ENCODE measurements at regions of chr12 and their contacts with region 1.

Region 1: GRCh38 chr12:94762259-94762942 is 112.0 kb upstream of the TMCC3 start:
- DNase-seq: no peak
- ATAC-seq: peak; percentile 45
- H3K4me3 Mint-ChIP-seq: no peak overlapping the region
- H3K27ac Mint-ChIP-seq: peak overlapping the region; percentile 43
- H3K4me1 Mint-ChIP-seq: peaks cover 49% of the 10 kb centered on the region
- H3K27me3 Mint-ChIP-seq: no peaks in the 10 kb centered on the region
- CTCF ChIP-seq: no peak

Region 2: GRCh38 chr12:94140556-94140955 is 621.8 kb before region 1 on chr12:
- CTCF ChIA-PET with region 1: no interaction called
- POLR2A ChIA-PET with region 1: no interaction called
- intact Hi-C with region 1: loop called (anchors 2 kb)
- DNase-seq: no peak
- ATAC-seq: peak; percentile 42
- H3K4me3 Mint-ChIP-seq: no peak overlapping the region
- H3K27ac Mint-ChIP-seq: no peak overlapping the region
- H3K4me1 Mint-ChIP-seq: peaks cover 2% of the 10 kb centered on the region
- H3K27me3 Mint-ChIP-seq: no peaks in the 10 kb centered on the region
- CTCF ChIP-seq: no peak

Region 3: DNA sequence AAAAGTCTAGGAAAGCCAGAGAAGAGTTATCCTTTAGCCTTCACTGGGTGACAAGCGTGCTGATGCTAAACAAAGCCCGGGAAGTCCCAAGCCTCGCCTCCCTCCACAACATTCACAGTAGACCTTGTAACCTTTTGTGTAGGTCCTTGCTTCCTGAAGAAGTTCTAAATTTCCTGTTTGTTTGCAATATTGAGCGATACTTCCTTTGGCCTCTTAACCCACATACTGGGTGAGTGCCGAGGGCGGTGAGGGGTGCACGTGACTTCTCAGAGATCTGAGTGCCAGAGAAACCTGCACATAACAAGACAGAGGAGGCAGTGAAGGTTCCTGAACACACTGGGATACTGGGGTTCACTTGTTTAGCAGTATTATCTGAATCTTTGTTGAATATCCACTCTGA is 479.7 kb before region 1 on chr12:
- CTCF ChIA-PET with region 1: no interaction called
- POLR2A ChIA-PET with region 1: no interaction called
- intact Hi-C with region 1: no loop called
- DNase-seq: no peak
- ATAC-seq: no peak
- H3K4me3 Mint-ChIP-seq: no peak overlapping the region
- H3K27ac Mint-ChIP-seq: peak overlapping the region; percentile 21
- H3K4me1 Mint-ChIP-seq: peaks cover 35% of the 10 kb centered on the region
- H3K27me3 Mint-ChIP-seq: no peaks in the 10 kb centered on the region
- CTCF ChIP-seq: no peak

Region 4: GRCh38 chr12:94603434-94604365 is 158.7 kb before region 1 on chr12:
- CTCF ChIA-PET with region 1: interaction called, 4 read pairs
- POLR2A ChIA-PET with region 1: interaction called, 5 read pairs
- intact Hi-C with region 1: loop called (anchors 1 kb)
- DNase-seq: peak; percentile 31
- ATAC-seq: peak; percentile 57
- H3K4me3 Mint-ChIP-seq: no peak overlapping the region
- H3K27ac Mint-ChIP-seq: no peak overlapping the region
- H3K4me1 Mint-ChIP-seq: no peaks in the 10 kb centered on the region
- H3K27me3 Mint-ChIP-seq: no peaks in the 10 kb centered on the region
- CTCF ChIP-seq: peak; percentile 24

Region 5: DNA sequence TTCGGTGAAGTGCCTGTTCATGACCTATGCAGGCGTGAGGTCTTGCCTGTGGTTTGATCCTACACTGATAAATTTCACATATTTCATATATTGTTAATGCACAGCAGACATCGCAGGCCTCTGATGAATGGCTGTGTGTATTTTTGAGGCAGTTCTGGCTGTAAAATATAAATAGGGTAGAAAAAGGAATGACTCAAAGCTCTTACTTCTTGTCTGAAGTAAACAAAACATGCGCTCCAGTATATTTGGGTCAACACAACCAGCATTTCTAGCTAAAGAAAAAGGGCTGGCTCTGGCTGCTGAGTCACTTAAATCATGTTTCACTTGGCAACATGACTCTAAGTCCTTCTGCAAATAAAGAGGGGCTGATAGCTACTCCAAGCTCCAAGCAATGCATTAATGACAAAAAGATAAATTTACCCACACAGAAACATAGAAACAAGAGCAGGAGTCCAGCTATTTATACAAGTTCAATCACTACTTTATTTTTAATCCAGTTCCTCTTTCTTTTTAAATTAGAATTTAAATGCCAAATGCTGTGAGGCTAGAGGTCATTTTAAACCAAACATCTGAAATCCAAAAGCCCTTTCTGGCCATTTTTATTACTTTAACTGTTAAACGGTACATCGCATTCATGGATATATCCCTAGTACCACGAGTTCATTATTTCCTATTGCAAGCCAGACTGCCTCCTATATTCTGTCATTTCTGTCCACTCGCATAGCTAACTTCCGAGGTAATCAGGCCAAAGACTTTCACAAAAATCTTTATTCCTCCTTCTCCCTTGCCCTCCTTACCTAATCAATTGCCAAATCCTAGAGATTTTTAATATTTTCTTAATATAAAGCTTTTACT is 57.7 kb before region 1 on chr12:
- CTCF ChIA-PET with region 1: interaction called, 13 read pairs
- POLR2A ChIA-PET with region 1: interaction called, 14 read pairs
- intact Hi-C with region 1: no loop called
- DNase-seq: no peak
- ATAC-seq: no peak
- H3K4me3 Mint-ChIP-seq: no peak overlapping the region
- H3K27ac Mint-ChIP-seq: no peak overlapping the region
- H3K4me1 Mint-ChIP-seq: peaks cover 73% of the 10 kb centered on the region
- H3K27me3 Mint-ChIP-seq: no peaks in the 10 kb centered on the region
- CTCF ChIP-seq: no peak

Region 6: DNA sequence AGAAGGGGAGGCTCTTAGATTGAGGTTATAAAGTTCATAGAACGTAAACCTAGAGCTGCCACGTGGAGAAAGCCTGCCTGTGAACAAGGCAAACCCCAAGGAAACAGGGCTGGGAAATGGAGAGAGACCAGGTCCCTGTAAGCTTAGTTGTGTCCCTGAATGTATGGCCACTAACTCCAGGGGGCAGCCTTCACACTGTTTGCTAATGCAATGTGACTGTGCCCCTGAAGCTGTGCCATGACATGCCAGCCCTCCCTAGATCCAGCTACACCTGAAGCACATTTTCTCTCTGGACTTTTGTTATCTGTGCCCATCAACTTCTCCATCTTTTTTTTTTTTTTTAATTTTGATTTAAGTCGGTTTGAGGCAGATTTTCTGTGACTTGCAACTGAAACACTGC is 51.5 kb before region 1 on chr12:
- CTCF ChIA-PET with region 1: interaction called, 13 read pairs
- POLR2A ChIA-PET with region 1: interaction called, 3 read pairs
- intact Hi-C with region 1: loop called (anchors 1 kb)
- DNase-seq: no peak
- ATAC-seq: peak; percentile 69
- H3K4me3 Mint-ChIP-seq: no peak overlapping the region
- H3K27ac Mint-ChIP-seq: no peak overlapping the region
- H3K4me1 Mint-ChIP-seq: peaks cover 32% of the 10 kb centered on the region
- H3K27me3 Mint-ChIP-seq: no peaks in the 10 kb centered on the region
- CTCF ChIP-seq: no peak

Region 7: GRCh38 chr12:95130096-95130495 is 367.7 kb after region 1 on chr12:
- CTCF ChIA-PET with region 1: no interaction called
- POLR2A ChIA-PET with region 1: no interaction called
- intact Hi-C with region 1: no loop called
- DNase-seq: no peak
- ATAC-seq: no peak
- H3K4me3 Mint-ChIP-seq: no peak overlapping the region
- H3K27ac Mint-ChIP-seq: no peak overlapping the region
- H3K4me1 Mint-ChIP-seq: no peaks in the 10 kb centered on the region
- H3K27me3 Mint-ChIP-seq: no peaks in the 10 kb centered on the region
- CTCF ChIP-seq: no peak

Measured in activated B cell treated with CpG ODN at 0.5 μM for 24 hours (primary cell).